K562 (cell line): ENCODE measurements at regions of chr1 and their contacts with region 1.

Region 1: DNA sequence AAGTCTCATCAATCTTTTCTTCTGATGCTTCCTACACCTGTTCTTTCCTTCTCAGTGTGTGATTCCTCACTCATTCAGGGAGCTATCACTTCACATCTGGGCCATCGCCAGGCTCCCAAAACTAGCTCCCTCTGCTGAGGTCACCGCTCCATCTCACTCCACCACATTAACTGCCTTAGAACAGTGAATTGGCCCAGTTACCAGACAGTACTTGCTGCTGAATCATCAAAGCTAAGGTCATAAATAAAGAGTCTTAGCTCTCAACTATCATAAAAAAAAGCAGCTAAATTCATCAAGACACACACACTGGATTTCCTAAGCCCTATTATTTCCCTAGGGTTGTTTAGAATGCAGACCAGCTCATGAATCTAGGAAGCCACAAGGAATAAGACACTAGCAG is 18.8 kb upstream of the SRM start:
- DNase-seq: no peak
- ATAC-seq: no peak
- H3K4me3 ChIP-seq: no peak overlapping the region
- H3K27ac ChIP-seq: no peak overlapping the region
- H3K4me1 ChIP-seq: no peaks in the 10 kb centered on the region
- H3K27me3 ChIP-seq: no peaks in the 10 kb centered on the region
- CTCF ChIP-seq: no peak
- EP300 ChIP-seq: no peak
- POLR2A ChIP-seq: no peak
- RAD21 ChIP-seq: no peak

Region 2: GRCh38 chr1:10796019-10796944 is 282.3 kb before region 1 on chr1 and contains the start of gene CASZ1:
- CTCF ChIA-PET with region 1: no interaction called
- POLR2A ChIA-PET with region 1: no interaction called
- in situ Hi-C with region 1: no loop called
- intact Hi-C with region 1: no loop called
- DNase-seq: peak; percentile 63 to 85 (median 82)
- ATAC-seq: peak; percentile 73
- H3K4me3 ChIP-seq: no peak within 1 kb of the TSS
- H3K27ac ChIP-seq: no peak within 1 kb of the TSS
- H3K4me1 ChIP-seq: peaks cover 0 to 22% of the 10 kb centered on the region in 2 experiments; a peak in 3 of 5 replicates
- H3K27me3 ChIP-seq: peaks cover 36 to 54% of the 10 kb centered on the region in 2 experiments
- CTCF ChIP-seq: no peak
- EP300 ChIP-seq: no peak
- POLR2A ChIP-seq: no peak
- RAD21 ChIP-seq: no peak; a peak in 1 of 4 replicates
- polyA plus RNA-seq, gene CASZ1: 0.01 TPM in 1 of 2 experiments, not detected in the other

Region 3: GRCh38 chr1:11099310-11100149 is 20.9 kb after region 1 on chr1 and contains the start of gene EXOSC10:
- CTCF ChIA-PET with region 1: no interaction called
- POLR2A ChIA-PET with region 1: interaction called, 13 read pairs
- in situ Hi-C with region 1: no loop called
- intact Hi-C with region 1: no loop called
- DNase-seq: peak; percentile 98 to 99 (median 98)
- ATAC-seq: peak; percentile 96
- H3K4me3 ChIP-seq: peak within 1 kb of the TSS; percentile 86
- H3K27ac ChIP-seq: peak within 1 kb of the TSS; percentile 87
- H3K4me1 ChIP-seq: peaks cover 8 to 14% of the 10 kb centered on the region in 2 experiments; a peak in 4 of 5 replicates
- H3K27me3 ChIP-seq: no peaks in the 10 kb centered on the region
- CTCF ChIP-seq: no peak
- EP300 ChIP-seq: no peak
- POLR2A ChIP-seq: peak; percentile 93
- RAD21 ChIP-seq: no peak
- polyA plus RNA-seq, gene EXOSC10: 23.4 to 61.4 TPM